Aorta (tissue), 5 donors: ENCODE measurements at regions of chr13 and their contacts with region 1.

Region 1: GRCh38 chr13:105334211-105334610 is 1201.3 kb downstream of the EFNB2 start:
- DNase-seq: no peak
- ATAC-seq: no peak
- H3K4me3 ChIP-seq: no peak overlapping the region
- H3K27ac ChIP-seq: peak overlapping the region; percentile 76 to 85
- H3K4me1 ChIP-seq: peaks cover 2 to 11% of the 10 kb centered on the region in 2 donors
- H3K27me3 ChIP-seq: no peaks in the 10 kb centered on the region

Region 2: GRCh38 chr13:104553186-104553585 is 781.0 kb before region 1 on chr13:
- intact Hi-C with region 1: no loop called
- DNase-seq: no peak
- ATAC-seq: no peak
- H3K4me3 ChIP-seq: no peak overlapping the region
- H3K27ac ChIP-seq: no peak overlapping the region
- H3K4me1 ChIP-seq: no peaks in the 10 kb centered on the region
- H3K27me3 ChIP-seq: no peaks in the 10 kb centered on the region

Region 3: GRCh38 chr13:105377452-105377851 is 43.2 kb after region 1 on chr13:
- intact Hi-C with region 1: no loop called
- DNase-seq: no peak
- ATAC-seq: no peak
- H3K4me3 ChIP-seq: no peak overlapping the region
- H3K27ac ChIP-seq: no peak overlapping the region
- H3K4me1 ChIP-seq: no peaks in the 10 kb centered on the region
- H3K27me3 ChIP-seq: no peaks in the 10 kb centered on the region

Region 4: GRCh38 chr13:105442941-105443340 is 108.7 kb after region 1 on chr13:
- intact Hi-C with region 1: loop called in 1 of 2 experiments (anchors 10 kb)
- DNase-seq: no peak
- ATAC-seq: peak; percentile 54
- H3K4me3 ChIP-seq: no peak overlapping the region
- H3K27ac ChIP-seq: no peak overlapping the region
- H3K4me1 ChIP-seq: no peaks in the 10 kb centered on the region
- H3K27me3 ChIP-seq: no peaks in the 10 kb centered on the region

Region 5: GRCh38 chr13:105485081-105485480 is 150.9 kb after region 1 on chr13:
- intact Hi-C with region 1: no loop called
- DNase-seq: no peak
- ATAC-seq: no peak
- H3K4me3 ChIP-seq: no peak overlapping the region
- H3K27ac ChIP-seq: no peak overlapping the region
- H3K4me1 ChIP-seq: no peaks in the 10 kb centered on the region
- H3K27me3 ChIP-seq: no peaks in the 10 kb centered on the region